HCT116 (cell line): ENCODE measurements at regions of chr6 and their contacts with region 1.

Region 1: GRCh38 chr6:145028144-145028818 is 707.0 kb downstream of the EPM2A start:
- DNase-seq: peak; percentile 71
- ATAC-seq: peak; percentile 98
- H3K4me3 ChIP-seq: peak overlapping the region in 1 of 2 experiments; percentile 5; a peak in 1 of 4 replicates
- H3K27ac ChIP-seq: no peak overlapping the region
- H3K4me1 ChIP-seq: peaks cover 0 to 25% of the 10 kb centered on the region in 2 experiments; a peak in 2 of 4 replicates
- H3K27me3 ChIP-seq: no peaks in the 10 kb centered on the region
- CTCF ChIP-seq: peak; percentile 52 to 76 (median 69)
- POLR2A ChIP-seq: no peak
- RAD21 ChIP-seq: peak; percentile 91

Region 2: GRCh38 chr6:144647971-144648651 is 380.2 kb before region 1 on chr6:
- CTCF ChIA-PET with region 1: interaction called, 3 read pairs
- POLR2A ChIA-PET with region 1: no interaction called
- RAD21 ChIA-PET with region 1: no interaction called
- intact Hi-C with region 1: loop called (anchors 5 kb)
- DNase-seq: no peak
- ATAC-seq: no peak
- H3K4me3 ChIP-seq: no peak overlapping the region
- H3K27ac ChIP-seq: no peak overlapping the region
- H3K4me1 ChIP-seq: peaks cover 0 to 8% of the 10 kb centered on the region in 2 experiments; a peak in 2 of 4 replicates
- H3K27me3 ChIP-seq: no peaks in the 10 kb centered on the region
- CTCF ChIP-seq: peak in 2 of 3 experiments; percentile 20 to 51; a peak in 1 of 6 replicates
- POLR2A ChIP-seq: no peak
- RAD21 ChIP-seq: peak; percentile 71

Region 3: DNA sequence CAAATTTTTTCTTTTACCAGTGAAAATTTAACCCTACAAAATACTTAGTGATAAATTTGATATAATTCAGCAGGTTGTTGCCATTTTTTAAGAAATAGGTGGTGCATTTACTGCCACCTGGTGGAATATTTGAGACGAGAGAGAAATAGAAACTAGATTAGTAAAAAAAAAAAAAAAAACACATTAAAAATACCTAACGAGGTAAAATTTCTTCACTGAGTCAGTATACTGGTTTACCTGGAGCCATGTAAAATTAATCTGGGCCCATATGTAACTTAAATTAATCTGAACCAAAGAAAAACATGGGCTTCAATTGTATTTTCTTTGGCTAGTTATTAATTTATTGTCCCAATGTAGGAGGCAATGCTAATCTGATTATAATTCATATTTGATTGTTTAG is 186.3 kb after region 1 on chr6:
- CTCF ChIA-PET with region 1: no interaction called
- POLR2A ChIA-PET with region 1: no interaction called
- RAD21 ChIA-PET with region 1: no interaction called
- intact Hi-C with region 1: loop called (anchors 2 kb)
- DNase-seq: peak; percentile 36
- ATAC-seq: no peak
- H3K4me3 ChIP-seq: no peak overlapping the region
- H3K27ac ChIP-seq: no peak overlapping the region
- H3K4me1 ChIP-seq: peaks cover 0 to 5% of the 10 kb centered on the region in 2 experiments; a peak in 2 of 4 replicates
- H3K27me3 ChIP-seq: no peaks in the 10 kb centered on the region
- CTCF ChIP-seq: peak; percentile 33 to 68 (median 63); a peak in 5 of 6 replicates
- POLR2A ChIP-seq: no peak
- RAD21 ChIP-seq: peak; percentile 77

Region 4: DNA sequence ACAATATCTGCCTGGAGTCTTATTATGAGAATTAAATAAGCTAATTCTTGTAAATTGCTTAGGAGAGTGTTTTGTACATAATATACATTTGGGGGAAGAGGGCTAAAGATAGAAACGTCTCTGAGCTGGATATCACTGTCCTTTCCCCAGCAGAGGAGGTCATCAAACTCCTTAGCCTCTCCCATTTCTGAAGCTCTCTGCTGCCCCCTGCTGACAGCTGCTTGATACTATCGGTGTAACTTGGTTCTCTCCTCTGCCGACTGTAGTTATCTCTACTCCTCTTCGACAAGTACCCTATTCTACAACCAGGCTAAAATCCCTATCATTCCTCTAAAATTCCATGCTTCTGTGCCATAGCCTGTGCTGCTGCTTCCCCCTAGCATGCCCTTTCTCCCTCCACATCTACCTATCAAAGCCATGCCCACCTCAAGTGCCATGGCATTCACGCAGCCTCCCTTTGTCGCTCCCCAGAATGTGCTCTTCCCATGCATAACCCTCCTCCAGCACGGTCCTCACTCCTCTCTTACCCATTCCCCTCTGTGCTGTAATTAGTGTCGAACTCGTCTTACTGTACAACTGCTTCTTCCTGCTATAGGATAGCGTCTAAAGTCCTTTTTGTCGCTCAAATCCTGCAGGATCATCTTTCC is 605.8 kb after region 1 on chr6:
- CTCF ChIA-PET with region 1: no interaction called
- POLR2A ChIA-PET with region 1: no interaction called
- RAD21 ChIA-PET with region 1: no interaction called
- intact Hi-C with region 1: loop called (anchors 10 kb)
- DNase-seq: peak; percentile 75
- ATAC-seq: peak; percentile 98
- H3K4me3 ChIP-seq: no peak overlapping the region
- H3K27ac ChIP-seq: no peak overlapping the region
- H3K4me1 ChIP-seq: no peaks in the 10 kb centered on the region
- H3K27me3 ChIP-seq: no peaks in the 10 kb centered on the region
- CTCF ChIP-seq: peak; percentile 46 to 80 (median 78); a peak in 5 of 6 replicates
- POLR2A ChIP-seq: no peak
- RAD21 ChIP-seq: peak; percentile 90